ENCODE measurements at regions of chr2 and their contacts with region 1.

Region 1: DNA sequence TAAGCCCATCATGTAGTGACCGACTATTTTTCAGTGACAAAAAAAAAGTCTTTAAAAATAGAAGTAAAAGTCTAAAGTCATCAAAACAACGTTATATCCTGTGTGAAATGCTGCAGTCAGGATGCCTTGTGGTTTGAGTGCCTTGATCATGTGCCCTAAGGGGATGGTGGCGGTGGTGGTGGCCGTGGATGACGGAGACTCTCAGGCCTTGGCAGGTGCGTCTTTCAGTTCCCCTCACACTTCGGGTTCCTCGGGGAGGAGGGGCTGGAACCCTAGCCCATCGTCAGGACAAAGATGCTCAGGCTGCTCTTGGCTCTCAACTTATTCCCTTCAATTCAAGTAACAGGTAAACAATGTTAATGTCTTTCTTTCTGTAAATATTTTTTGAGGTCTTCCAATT is at the start of gene CD28:
- DNase-seq: peak; percentile 97
- H3K4me3 Mint-ChIP-seq: peak within 1 kb of the TSS; percentile 86
- H3K27ac Mint-ChIP-seq: peak within 1 kb of the TSS; percentile 99
- H3K4me1 Mint-ChIP-seq: peaks cover 49% of the 10 kb centered on the region
- H3K27me3 Mint-ChIP-seq: no peaks in the 10 kb centered on the region
- total RNA-seq, gene CD28: 279 to 285 TPM

Region 2: GRCh38 chr2:203484266-203485112 is 221.9 kb before region 1 on chr2:
- CTCF ChIA-PET with region 1: interaction called, 3 read pairs
- POLR2A ChIA-PET with region 1: interaction called, 3 read pairs
- intact Hi-C with region 1: loop called (anchors 5 kb)
- DNase-seq: peak; percentile 59
- H3K4me3 Mint-ChIP-seq: no peak overlapping the region
- H3K27ac Mint-ChIP-seq: peak overlapping the region; percentile 1
- H3K4me1 Mint-ChIP-seq: peaks cover 10% of the 10 kb centered on the region
- H3K27me3 Mint-ChIP-seq: no peaks in the 10 kb centered on the region

Region 3: DNA sequence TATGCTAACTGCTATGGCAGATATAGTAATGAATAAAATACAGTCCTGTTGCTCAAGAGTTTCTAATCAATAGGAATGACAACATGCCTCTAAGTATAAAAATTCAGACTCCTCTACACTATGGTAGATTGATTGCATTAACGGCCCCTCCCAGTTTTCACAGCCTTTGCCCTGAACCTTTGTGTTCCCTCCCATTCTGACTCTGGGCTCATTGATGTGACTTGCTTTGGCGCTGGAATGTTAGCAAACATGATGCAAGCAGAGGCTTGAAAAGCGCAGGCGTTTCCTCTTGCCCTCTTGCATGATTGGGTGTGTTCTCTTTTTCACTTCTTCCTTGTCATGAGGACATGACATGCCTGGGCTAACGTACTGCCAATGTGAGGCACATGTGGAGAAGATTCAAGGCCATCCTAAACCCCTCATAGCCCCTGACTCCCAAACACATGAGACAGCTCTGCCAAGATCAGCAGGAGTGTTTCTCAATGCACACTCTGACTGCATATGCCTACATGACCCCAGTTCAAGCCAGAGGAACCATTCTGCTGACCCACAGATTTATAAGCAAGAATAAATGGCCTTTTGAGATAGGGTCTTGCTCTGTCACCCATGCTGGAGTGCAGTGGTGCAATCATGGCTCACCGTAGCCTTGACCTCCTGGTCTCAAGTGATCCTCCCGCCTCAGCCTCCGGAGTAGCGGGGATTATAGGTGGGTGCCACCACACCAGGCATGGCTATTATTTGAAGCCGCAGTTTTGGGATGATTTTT is 49.7 kb before region 1 on chr2:
- CTCF ChIA-PET with region 1: no interaction called
- POLR2A ChIA-PET with region 1: no interaction called
- intact Hi-C with region 1: no loop called
- DNase-seq: peak; percentile 27
- H3K4me3 Mint-ChIP-seq: no peak overlapping the region
- H3K27ac Mint-ChIP-seq: no peak overlapping the region
- H3K4me1 Mint-ChIP-seq: peaks cover 22% of the 10 kb centered on the region
- H3K27me3 Mint-ChIP-seq: no peaks in the 10 kb centered on the region

Region 4: DNA sequence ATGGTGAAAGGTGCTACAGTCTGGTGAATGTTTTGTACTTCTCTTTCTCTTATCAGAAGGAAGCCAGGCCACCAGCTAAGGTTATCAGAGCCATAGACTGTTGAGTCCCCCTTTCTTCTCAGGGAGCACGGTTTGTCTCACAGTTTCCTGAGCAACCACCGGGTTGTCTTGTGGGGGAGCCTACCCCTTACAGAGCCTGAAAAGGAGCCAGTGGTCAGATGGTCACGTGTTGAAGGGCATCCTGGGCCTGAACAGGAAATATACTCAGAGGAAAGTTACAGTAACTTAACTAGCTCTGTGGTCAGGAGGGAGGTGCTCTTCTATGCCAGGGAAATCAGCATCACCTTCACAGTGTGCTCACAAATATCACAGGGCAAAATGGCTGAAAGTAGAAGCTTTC is 11.7 kb after region 1 on chr2:
- CTCF ChIA-PET with region 1: interaction called, 4 read pairs
- POLR2A ChIA-PET with region 1: interaction called, 176 read pairs
- intact Hi-C with region 1: loop called (anchors 1 kb)
- DNase-seq: peak; percentile 85
- H3K4me3 Mint-ChIP-seq: peak overlapping the region; percentile 69
- H3K27ac Mint-ChIP-seq: peak overlapping the region; percentile 94
- H3K4me1 Mint-ChIP-seq: peaks cover 96% of the 10 kb centered on the region
- H3K27me3 Mint-ChIP-seq: no peaks in the 10 kb centered on the region

Region 5: GRCh38 chr2:203751685-203752271 is 45.4 kb after region 1 on chr2:
- CTCF ChIA-PET with region 1: interaction called, 3 read pairs
- POLR2A ChIA-PET with region 1: interaction called, 50 read pairs
- intact Hi-C with region 1: no loop called
- DNase-seq: no peak
- H3K4me3 Mint-ChIP-seq: no peak overlapping the region
- H3K27ac Mint-ChIP-seq: peak overlapping the region; percentile 81
- H3K4me1 Mint-ChIP-seq: peaks cover 56% of the 10 kb centered on the region
- H3K27me3 Mint-ChIP-seq: no peaks in the 10 kb centered on the region

Region 6: DNA sequence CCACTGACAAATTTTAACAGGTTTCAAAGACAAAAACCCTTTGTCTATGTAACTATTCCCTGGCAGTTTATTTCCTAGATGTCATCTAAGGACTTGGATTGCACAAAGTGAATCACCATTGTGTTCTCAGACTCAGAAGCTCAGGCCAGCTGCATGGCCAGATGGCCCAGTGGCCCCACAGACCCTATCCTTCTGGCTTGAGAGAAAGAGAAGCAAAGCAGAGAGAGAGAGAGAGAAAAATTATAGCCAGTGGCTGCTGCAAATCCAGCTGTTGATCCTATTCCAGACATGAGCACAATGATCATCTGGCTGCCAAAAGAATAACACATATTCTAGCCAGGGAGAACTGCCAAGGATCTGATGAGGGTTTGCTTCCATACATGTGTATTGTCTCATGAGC is 187.0 kb after region 1 on chr2:
- CTCF ChIA-PET with region 1: interaction called, 3 read pairs
- POLR2A ChIA-PET with region 1: interaction called, 10 read pairs
- intact Hi-C with region 1: no loop called
- DNase-seq: no peak
- H3K4me3 Mint-ChIP-seq: peak overlapping the region; percentile 14
- H3K27ac Mint-ChIP-seq: peak overlapping the region; percentile 84
- H3K4me1 Mint-ChIP-seq: peaks cover 77% of the 10 kb centered on the region
- H3K27me3 Mint-ChIP-seq: no peaks in the 10 kb centered on the region

Region 7: GRCh38 chr2:203997980-203998809 is 291.8 kb after region 1 on chr2:
- CTCF ChIA-PET with region 1: no interaction called
- POLR2A ChIA-PET with region 1: no interaction called
- intact Hi-C with region 1: loop called (anchors 2 kb)
- DNase-seq: no peak
- H3K4me3 Mint-ChIP-seq: peak overlapping the region; percentile 21
- H3K27ac Mint-ChIP-seq: peak overlapping the region; percentile 82
- H3K4me1 Mint-ChIP-seq: peaks cover 65% of the 10 kb centered on the region
- H3K27me3 Mint-ChIP-seq: no peaks in the 10 kb centered on the region

Measured in activated CD4-positive, alpha-beta memory T cell treated with anti-CD3 and anti-CD28 coated beads for 36 hours (primary cell).